Activated CD8-positive, alpha-beta T cell treated with anti-CD3 and anti-CD28 coated beads, Interleukin-2, amount 10 ng/mL, durations not matched to agents 7 days and 5 days (primary cell): ENCODE measurements at regions of chr12 and their contacts with region 1.

Region 1: DNA sequence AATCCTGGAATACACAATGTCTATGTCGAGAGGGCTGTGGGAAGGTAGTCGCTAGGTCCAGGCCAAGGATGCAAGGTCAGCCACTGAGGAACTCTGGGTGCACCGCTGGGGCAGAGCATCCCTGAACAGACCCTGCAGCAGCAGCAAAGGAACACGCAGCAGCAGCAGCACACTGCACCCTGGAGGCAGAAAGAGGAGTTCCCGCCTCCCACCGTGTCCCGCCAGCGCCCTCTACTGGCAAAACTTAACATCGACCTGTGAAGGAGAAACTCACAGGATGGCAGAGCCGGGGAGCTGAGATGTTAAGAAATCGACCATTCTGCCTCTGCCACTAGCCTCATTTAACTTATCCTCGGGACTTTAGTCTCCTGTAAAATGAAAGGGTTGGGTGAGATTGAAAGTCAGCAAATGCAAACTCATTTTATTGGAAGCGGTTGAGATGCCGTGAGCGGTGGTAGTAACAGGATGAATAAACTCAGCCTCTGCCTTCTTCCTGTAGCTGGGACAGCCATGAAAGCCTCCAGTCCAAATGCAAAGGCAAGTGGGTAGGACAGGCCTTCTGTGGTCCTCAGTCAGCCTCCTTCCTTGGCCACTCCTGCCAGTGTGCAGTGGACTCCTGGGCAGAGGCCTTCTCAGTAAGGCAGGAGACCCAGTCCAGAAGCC is 45.6 kb downstream of the STAB2 start:
- DNase-seq: peak; percentile 81
- ATAC-seq: peak; percentile 88
- H3K4me3 Mint-ChIP-seq: no peak overlapping the region
- H3K27ac Mint-ChIP-seq: no peak overlapping the region
- H3K4me1 Mint-ChIP-seq: no peaks in the 10 kb centered on the region
- H3K27me3 Mint-ChIP-seq: peaks cover under 1% of the 10 kb centered on the region

Region 2: DNA sequence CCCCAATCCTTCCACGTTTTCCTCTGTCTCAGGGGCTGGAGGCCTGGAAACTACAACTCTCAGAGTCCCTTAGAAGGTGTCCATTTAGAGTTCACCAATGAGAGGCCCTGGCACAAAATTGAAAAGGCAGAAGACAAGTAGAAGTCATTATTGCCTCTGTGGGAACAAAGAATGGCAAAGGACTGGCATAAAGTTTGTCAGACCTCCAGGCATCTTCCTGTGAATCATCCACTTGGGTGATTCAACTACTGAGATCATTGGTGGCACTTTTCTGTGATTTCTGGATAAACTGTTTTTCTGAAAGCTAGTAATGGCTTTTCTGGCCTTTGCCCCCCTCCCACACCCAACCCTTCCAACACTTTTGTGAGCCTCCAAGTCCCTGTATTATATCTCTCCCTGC is 94.3 kb before region 1 on chr12:
- CTCF ChIA-PET with region 1: no interaction called
- POLR2A ChIA-PET with region 1: no interaction called
- DNase-seq: no peak
- ATAC-seq: no peak
- H3K4me3 Mint-ChIP-seq: no peak overlapping the region
- H3K27ac Mint-ChIP-seq: no peak overlapping the region
- H3K4me1 Mint-ChIP-seq: peaks cover 2% of the 10 kb centered on the region
- H3K27me3 Mint-ChIP-seq: no peaks in the 10 kb centered on the region

Region 3: DNA sequence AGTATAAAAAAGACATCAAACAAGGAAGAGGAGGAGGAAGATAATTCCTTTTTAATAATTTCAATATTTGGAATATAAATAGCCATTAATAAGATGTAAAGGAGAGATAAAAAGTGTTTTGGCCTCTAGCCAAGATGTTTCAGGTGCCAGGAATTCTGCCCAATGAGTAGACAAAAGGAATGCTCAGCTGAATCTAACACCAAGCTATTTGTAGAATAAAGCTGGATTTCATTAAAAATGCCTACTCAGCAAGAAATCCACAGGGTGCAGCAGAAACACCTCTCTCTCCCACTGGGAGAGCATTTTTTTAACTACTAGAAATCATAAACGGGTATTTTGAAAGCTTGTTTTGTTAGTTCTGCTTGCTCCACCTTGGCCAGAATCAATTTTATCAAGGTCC is 49.7 kb before region 1 on chr12:
- CTCF ChIA-PET with region 1: interaction called, 13 read pairs
- POLR2A ChIA-PET with region 1: no interaction called
- DNase-seq: no peak
- ATAC-seq: no peak
- H3K4me3 Mint-ChIP-seq: no peak overlapping the region
- H3K27ac Mint-ChIP-seq: no peak overlapping the region
- H3K4me1 Mint-ChIP-seq: no peaks in the 10 kb centered on the region
- H3K27me3 Mint-ChIP-seq: peaks cover 27% of the 10 kb centered on the region